ENCODE measurements at regions of chr20 and their contacts with region 1.

Region 1: DNA sequence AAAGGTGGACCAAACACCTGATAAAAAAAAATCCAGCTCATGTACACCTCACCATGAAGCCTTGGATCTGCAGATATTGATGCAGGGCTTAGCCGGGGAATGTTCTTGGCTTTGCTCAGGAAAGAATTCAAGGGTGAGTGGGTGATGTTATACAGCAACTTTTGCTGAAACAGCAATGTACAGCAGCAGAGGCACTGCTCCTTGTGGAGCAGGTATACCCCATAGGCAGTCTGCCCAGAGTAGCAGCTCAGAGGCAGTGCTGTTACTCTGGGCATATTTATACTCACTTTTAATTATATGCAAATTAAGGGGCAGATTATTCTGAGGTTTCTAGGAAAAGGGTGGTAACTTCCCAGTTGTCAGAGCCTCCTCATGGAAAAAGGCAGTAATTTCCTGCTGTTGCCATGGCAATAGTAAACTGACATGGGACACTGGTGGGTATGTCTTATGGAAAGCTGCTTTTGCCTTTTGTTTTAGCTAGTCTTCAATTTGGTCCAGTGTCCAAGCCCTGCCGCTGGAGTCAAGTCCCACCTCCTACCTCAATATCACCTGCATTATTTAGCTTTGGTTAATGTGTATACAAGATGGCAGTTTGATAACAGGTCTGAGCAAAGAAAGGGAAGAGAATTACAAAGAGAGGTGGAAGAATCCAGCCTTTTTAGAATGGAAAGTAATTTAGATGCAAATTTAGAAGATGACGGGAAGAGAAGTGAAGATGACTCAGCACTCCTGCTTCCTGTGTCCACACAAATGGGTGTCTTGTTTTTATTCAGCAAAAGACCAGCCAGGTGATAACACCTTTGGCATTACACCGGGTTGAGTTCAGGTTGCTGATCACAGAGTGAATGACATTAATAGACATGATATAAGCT is 110.1 kb upstream of the JAG1 start:
- DNase-seq: no peak
- ATAC-seq: no peak; a peak in 1 of 6 replicates
- H3K4me3 ChIP-seq: no peak overlapping the region
- H3K27ac ChIP-seq: peak overlapping the region; percentile 11 to 39; a peak in 3 of 6 replicates
- H3K4me1 ChIP-seq: peaks cover 11% of the 10 kb centered on the region; the same call in 2 of the 3 replicates
- CTCF ChIP-seq: no peak
- EP300 ChIP-seq: no peak
- POLR2A ChIP-seq: no peak
- RAD21 ChIP-seq: no peak

Region 2: GRCh38 chr20:10647465-10647864 is 136.5 kb before region 1 on chr20:
- CTCF ChIA-PET with region 1: no interaction called
- POLR2A ChIA-PET with region 1: no interaction called
- DNase-seq: no peak
- ATAC-seq: peak; percentile 41 to 49; a peak in 3 of 6 replicates
- H3K4me3 ChIP-seq: no peak overlapping the region
- H3K27ac ChIP-seq: 0 out of 6 replicates have a peak overlapping the region, but pooled peaks of 1 of the 2 experiments have one; percentile 6
- H3K4me1 ChIP-seq: peaks cover 7% of the 10 kb centered on the region; the same call in 1 of the 3 replicates
- CTCF ChIP-seq: peak; percentile 28
- EP300 ChIP-seq: no peak
- POLR2A ChIP-seq: no peak
- RAD21 ChIP-seq: peak in 1 of 2 experiments; percentile 18; a peak in 1 of 5 replicates

Region 3: DNA sequence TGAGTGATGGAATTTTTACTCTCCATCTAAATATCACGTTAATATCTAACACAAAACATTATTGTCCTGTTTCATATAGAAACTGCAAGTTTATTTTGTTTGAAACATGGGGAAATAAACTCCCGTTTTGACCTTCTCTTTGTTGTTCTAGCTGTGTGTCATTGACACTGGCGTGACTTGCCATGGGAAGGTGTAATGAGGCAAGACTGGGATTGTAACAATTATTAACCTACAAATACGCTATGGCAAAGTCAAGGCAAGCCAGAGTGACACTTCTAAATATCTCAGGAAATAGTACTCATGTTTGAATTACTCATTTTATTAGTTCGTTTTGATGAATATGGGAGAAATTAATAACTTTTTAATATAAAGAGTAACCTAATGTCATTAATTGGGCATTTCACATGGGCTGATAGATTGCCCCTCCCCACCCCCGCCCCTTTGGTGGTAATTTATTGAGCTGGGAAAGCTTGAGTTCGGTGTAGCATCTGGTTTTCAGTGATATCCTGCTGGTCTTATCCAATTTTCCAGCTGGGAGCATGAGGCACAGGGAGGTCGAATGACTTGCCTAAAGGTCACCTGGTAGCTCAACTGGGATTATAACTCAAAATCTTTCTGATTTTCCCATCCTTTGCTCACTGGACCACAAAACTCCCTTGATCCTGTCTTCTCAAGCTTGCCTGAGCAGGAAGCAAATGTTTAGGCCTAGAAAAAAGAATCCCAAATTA is 270.5 kb after region 1 on chr20:
- CTCF ChIA-PET with region 1: no interaction called
- POLR2A ChIA-PET with region 1: interaction called, 11 read pairs
- DNase-seq: peak in 1 of 2 experiments; percentile 9
- ATAC-seq: no peak
- H3K4me3 ChIP-seq: no peak overlapping the region
- H3K27ac ChIP-seq: no peak overlapping the region
- H3K4me1 ChIP-seq: peaks cover 9% of the 10 kb centered on the region; the same call in 2 of the 3 replicates
- CTCF ChIP-seq: no peak
- EP300 ChIP-seq: no peak
- POLR2A ChIP-seq: no peak
- RAD21 ChIP-seq: no peak

Measured in A549 (cell line).